ENCODE measurements at regions of chr19 and their contacts with region 1.

Region 1: GRCh38 chr19:11361037-11361770 is 6.0 kb downstream of the PLPPR2 start:
- DNase-seq: peak; percentile 100
- ATAC-seq: peak; percentile 91
- H3K4me3 Mint-ChIP-seq: peak overlapping the region; percentile 76
- H3K27ac Mint-ChIP-seq: no peak overlapping the region
- H3K4me1 Mint-ChIP-seq: peaks cover 16% of the 10 kb centered on the region
- H3K27me3 Mint-ChIP-seq: peaks cover 53% of the 10 kb centered on the region
- CTCF ChIP-seq: no peak

Region 2: GRCh38 chr19:11339254-11340098 is 21.7 kb before region 1 on chr19 and contains the start of gene RAB3D:
- CTCF ChIA-PET with region 1: interaction called, 24 read pairs
- POLR2A ChIA-PET with region 1: interaction called, 3 read pairs
- DNase-seq: peak; percentile 98
- ATAC-seq: peak; percentile 99
- H3K4me3 Mint-ChIP-seq: peak within 1 kb of the TSS; percentile 81
- H3K27ac Mint-ChIP-seq: peak within 1 kb of the TSS; percentile 41; the same call in 1 of the 2 replicates
- H3K4me1 Mint-ChIP-seq: peaks cover 7% of the 10 kb centered on the region
- H3K27me3 Mint-ChIP-seq: no peaks in the 10 kb centered on the region
- CTCF ChIP-seq: no peak
- total RNA-seq, gene RAB3D: 18.9 to 27.8 TPM (median 27.0 TPM) in 3 replicates

Region 3: DNA sequence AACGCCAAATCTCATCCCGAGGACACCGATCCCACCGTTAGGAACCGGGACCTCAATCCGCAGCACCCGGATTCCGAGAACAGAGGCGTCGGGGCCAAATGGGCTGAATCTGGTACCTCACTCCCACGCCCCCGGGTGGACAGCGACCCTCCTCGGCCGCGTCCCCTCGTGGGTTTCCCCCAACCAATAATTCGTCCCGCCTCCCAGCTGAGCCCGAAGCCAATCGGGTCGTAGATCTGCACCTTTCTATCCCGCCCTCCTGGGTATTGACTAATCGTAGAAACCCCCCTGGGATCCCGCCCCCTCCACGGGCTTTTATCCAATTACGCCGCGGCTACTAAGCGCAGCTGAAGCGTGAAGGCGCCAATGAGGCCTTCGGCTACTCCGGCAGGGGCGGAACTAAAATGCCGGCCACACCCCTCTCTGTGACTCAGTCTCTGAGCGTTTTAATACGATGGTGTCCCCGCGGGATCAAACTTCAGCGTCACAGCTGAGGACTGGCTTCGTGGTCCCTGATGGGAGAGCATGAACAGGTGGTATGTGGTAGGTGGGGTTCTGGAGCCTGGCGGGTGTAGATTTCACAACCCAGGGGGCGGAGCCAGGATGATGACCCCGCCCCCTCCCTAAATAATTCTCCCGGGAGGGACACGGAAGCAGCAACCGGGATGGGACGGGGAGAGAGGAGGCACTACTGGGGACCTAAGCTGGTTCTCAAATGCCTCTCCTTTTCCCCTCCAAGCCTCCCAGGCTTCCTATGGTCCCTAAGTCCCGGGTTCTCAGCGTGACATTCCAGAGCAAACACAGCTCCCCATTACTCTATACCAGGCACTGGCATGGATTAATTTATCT is 14.9 kb before region 1 on chr19 and contains the starts of genes CCDC159 and TMEM205:
- CTCF ChIA-PET with region 1: interaction called, 18 read pairs
- POLR2A ChIA-PET with region 1: interaction called, 3 read pairs
- DNase-seq: peak; percentile 99
- ATAC-seq: peak; percentile 96
- H3K4me3 Mint-ChIP-seq: peak within 1 kb of the TSS; percentile 95
- H3K27ac Mint-ChIP-seq: peak within 1 kb of the TSS; percentile 87
- H3K4me1 Mint-ChIP-seq: peaks cover 24% of the 10 kb centered on the region
- H3K27me3 Mint-ChIP-seq: peaks cover 20% of the 10 kb centered on the region; the same call in 1 of the 2 replicates
- CTCF ChIP-seq: no peak
- total RNA-seq, gene CCDC159: 5.5 to 8.5 TPM (median 6.8 TPM) in 3 replicates
- total RNA-seq, gene TMEM205: 69.9 to 78.3 TPM (median 76.0 TPM) in 3 replicates

Region 4: DNA sequence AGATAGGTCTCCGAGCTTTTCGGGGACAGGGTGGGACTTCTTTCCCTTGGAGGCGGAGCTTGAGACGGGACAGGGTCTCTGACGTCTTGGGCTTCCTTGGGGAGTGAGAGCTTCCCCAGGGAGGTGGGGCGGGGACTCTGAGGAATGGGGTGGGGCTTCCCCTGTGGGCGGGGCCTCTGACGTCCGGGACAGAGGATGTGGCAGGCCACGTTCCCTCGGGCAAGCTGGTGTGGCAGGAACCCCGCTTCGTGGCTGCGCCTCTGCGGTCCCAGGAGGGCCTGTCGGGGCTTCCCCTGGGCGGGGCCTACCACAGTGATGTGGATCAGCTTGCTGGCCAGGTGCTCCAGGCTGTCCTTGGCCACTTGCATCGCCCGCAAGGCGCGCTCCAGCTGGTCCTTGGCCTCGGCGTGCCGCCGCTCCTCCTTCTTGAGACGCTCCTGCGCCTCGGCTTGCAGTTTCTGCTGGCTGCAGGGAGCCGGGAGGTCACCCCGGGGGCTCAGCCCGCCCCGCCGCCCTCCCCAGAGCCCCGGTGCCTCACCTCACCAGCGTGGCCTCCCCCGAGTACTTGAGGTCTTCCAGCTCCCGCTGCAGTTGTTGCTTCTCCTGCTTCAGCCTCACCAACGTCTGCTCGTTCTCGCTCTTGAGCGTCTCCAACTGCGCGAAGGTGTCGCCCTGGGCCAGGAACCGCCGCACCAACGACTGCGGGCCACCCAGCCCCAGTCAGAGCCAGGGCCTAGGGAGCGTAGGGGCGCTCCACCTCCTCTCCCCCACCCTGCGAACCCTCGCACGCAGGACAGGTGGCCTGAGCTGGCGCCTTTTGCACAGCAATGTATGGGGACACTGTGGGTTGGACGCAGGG is 61.2 kb after region 1 on chr19:
- CTCF ChIA-PET with region 1: interaction called, 12 read pairs
- POLR2A ChIA-PET with region 1: interaction called, 4 read pairs
- DNase-seq: peak; percentile 99
- ATAC-seq: peak; percentile 70
- H3K4me3 Mint-ChIP-seq: peak overlapping the region; percentile 87
- H3K27ac Mint-ChIP-seq: peak overlapping the region; percentile 97
- H3K4me1 Mint-ChIP-seq: peaks cover 15% of the 10 kb centered on the region
- H3K27me3 Mint-ChIP-seq: peaks cover 29% of the 10 kb centered on the region
- CTCF ChIP-seq: no peak

Region 5: DNA sequence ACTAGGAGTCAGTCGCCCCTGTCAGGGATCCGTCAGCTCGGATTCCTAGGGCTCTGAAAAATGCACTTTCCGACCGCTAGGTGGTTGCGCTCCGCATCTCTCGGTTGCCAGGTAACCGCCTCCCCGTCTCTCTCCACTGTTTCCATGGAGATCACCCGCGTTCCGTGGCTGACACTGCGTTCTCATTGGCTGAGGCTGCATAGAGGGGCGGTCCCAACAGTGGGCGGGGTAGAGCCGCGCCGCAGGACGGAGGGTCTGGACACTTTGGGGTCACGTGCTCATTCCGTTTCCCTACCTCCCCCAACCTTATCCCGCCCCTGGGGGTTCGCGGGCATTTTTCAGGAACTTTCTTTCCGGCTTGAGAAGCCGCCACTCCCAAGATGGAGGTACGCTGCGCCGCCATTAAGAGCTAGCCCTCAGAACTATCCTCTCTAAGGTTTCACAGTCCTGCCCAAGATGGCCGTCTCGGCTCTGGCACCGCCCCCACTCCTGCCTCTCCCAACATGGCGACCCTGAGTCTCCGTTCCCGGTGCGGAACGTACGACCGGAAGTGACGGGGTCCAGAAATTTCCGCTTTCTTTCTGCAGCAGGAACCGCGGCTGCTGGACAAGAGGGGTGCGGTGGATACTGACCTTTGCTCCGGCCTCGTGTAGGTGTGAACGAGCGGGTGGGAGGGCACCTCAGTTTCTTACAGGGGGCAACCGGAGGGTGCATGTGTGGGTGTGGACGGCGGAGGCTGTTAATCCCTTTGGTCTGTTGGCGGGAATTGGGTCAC is 74.0 kb after region 1 on chr19 and contains the starts of genes ODAD3 and PRKCSH:
- CTCF ChIA-PET with region 1: interaction called, 16 read pairs
- POLR2A ChIA-PET with region 1: no interaction called
- DNase-seq: peak; percentile 99
- ATAC-seq: peak; percentile 91
- H3K4me3 Mint-ChIP-seq: peak within 1 kb of the TSS; percentile 96
- H3K27ac Mint-ChIP-seq: peak within 1 kb of the TSS; percentile 97
- H3K4me1 Mint-ChIP-seq: peaks cover 11% of the 10 kb centered on the region
- H3K27me3 Mint-ChIP-seq: no peaks in the 10 kb centered on the region
- CTCF ChIP-seq: peak; percentile 95
- total RNA-seq, gene ODAD3: 4.1 to 5.8 TPM (median 4.8 TPM) in 3 replicates
- total RNA-seq, gene PRKCSH: 396 to 405 TPM (median 402 TPM) in 3 replicates